ENCODE measurements at regions of chr14 and their contacts with region 1.

Region 1: DNA sequence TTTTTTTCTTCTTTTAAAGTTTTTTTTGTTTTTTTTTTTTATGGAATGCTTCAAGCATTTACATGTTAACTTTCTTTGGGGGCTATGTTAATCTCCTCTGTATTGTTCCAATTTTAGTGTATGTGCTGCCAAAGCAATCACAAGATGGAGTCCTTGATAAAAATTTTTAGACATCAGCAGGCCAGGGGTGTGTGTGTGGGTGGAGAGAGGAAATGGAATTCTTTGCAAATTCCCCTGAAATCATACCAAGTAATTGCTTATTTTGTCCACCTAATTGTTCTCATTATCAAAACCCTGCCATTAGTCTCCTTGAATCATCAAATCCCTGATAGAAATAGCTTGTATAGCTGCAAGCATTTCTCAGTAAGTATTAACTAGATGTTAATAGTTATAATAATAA is 21.7 kb downstream of the RNF212B start:
- DNase-seq: no peak
- ATAC-seq: no peak
- H3K4me3 ChIP-seq: no peak overlapping the region
- H3K27ac ChIP-seq: no peak overlapping the region
- H3K4me1 ChIP-seq: no peaks in the 10 kb centered on the region
- H3K27me3 ChIP-seq: peaks cover 25% of the 10 kb centered on the region
- CTCF ChIP-seq: no peak

Region 2: DNA sequence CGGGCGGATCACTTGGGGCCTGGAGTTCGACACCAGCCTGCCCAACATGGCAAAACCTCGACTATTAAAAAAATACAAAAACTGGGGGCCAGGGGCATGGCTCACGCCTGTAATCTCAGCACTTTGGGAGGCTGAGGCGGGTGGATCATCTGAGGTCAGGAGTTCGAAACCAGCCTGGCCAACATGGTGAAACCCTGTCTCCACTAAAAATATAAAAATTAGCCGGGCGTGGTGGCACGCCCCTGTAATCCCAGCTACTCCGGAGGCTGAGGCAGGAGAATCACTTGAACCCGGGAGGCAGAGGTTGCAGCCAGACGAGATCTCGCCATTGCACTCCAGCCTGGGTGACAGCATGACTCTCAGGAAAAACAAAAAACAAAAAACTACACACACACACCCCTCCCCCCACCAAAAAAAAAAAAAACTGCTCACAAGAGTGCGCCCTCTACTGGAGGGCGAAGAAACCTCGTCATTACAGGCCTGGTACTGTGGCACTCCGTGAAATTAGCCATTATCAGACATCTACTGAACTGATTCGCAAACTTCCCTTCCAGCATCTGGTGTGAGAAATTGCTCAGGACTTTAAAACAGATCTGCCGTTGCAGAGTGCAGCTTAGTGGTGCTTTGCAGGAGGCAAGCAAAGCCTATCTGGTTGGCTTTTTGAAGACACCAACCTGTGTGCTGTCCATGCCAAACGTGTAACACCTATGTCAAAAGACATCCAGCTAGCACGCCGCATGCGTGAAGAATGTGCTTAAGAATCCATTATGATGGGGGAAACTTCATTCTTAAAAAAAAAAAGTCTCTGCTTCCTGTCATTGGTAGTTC is 35.5 kb after region 1 on chr14:
- CTCF ChIA-PET with region 1: no interaction called
- POLR2A ChIA-PET with region 1: no interaction called
- intact Hi-C with region 1: loop called (anchors 2 kb)
- DNase-seq: peak; percentile 66
- ATAC-seq: peak; percentile 70
- H3K4me3 ChIP-seq: no peak overlapping the region
- H3K27ac ChIP-seq: no peak overlapping the region
- H3K4me1 ChIP-seq: peaks cover 3% of the 10 kb centered on the region
- H3K27me3 ChIP-seq: no peaks in the 10 kb centered on the region
- CTCF ChIP-seq: peak; percentile 89

Measured in PC-3 (cell line).